Heart right ventricle (tissue), 16 donors: ENCODE measurements at regions of chr2 and their contacts with region 1.

Region 1: GRCh38 chr2:60391649-60392375 is 161.6 kb downstream of the BCL11A start:
- DNase-seq: no peak
- ATAC-seq: no peak
- H3K4me3 ChIP-seq: no peak overlapping the region
- H3K27ac ChIP-seq: no peak overlapping the region
- H3K4me1 ChIP-seq: no peaks in the 10 kb centered on the region
- H3K27me3 ChIP-seq: peaks cover 0 to 14% (median 0%) of the 10 kb centered on the region in 7 donors
- CTCF ChIP-seq: no peak

Region 2: GRCh38 chr2:58466804-58467203 is 1925.0 kb before region 1 on chr2:
- intact Hi-C with region 1: loop called in 1 of 10 experiments (anchors 10 kb)
- DNase-seq: no peak
- ATAC-seq: no peak
- H3K4me3 ChIP-seq: no peak overlapping the region
- H3K27ac ChIP-seq: no peak overlapping the region
- H3K4me1 ChIP-seq: no peaks in the 10 kb centered on the region
- H3K27me3 ChIP-seq: no peaks in the 10 kb centered on the region
- CTCF ChIP-seq: no peak